ENCODE measurements at regions of chr4 and their contacts with region 1.

Region 1: DNA sequence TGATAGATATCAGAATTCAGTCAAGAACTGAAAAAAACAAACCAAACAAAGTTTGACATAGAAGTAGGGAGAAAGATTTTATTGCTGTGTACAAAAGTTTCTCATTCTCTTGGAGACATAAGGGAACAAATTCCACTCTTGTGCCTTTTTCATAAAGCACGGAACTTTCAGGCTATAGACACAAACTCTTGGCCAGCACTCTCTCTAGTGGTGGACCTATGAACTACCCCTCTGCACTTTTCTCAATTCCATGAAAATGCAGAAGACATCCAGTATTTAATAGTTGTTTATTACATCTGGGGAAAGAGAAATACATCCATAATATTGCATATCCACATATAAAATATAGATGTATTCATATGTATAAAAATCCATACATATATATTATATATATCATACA is 291.6 kb upstream of the HS3ST1 start:
- DNase-seq: no peak
- ATAC-seq: peak in 1 of 4 donors; percentile 42
- H3K4me3 ChIP-seq: no peak overlapping the region
- H3K27ac ChIP-seq: no peak overlapping the region
- H3K4me1 ChIP-seq: peaks cover 0 to 5% (median 0%) of the 10 kb centered on the region in 12 donors
- H3K27me3 ChIP-seq: no peaks in the 10 kb centered on the region
- CTCF ChIP-seq: peak; percentile 60 to 80 (median 72)
- POLR2A ChIP-seq: no peak

Region 2: GRCh38 chr4:10582059-10582686 is 1138.1 kb before region 1 on chr4:
- intact Hi-C with region 1: loop called in 8 of 10 experiments (anchors 5 to 10 kb)
- DNase-seq: peak in 3 of 5 donors; percentile 23 to 30 (median 23)
- ATAC-seq: peak in 2 of 4 donors; percentile 58
- H3K4me3 ChIP-seq: no peak overlapping the region
- H3K27ac ChIP-seq: no peak overlapping the region
- H3K4me1 ChIP-seq: peaks cover 0 to 11% (median 0%) of the 10 kb centered on the region in 12 donors
- H3K27me3 ChIP-seq: peaks cover 0 to 10% (median 0%) of the 10 kb centered on the region in 9 donors
- CTCF ChIP-seq: peak; percentile 57 to 87 (median 77)
- POLR2A ChIP-seq: no peak

Region 3: GRCh38 chr4:11424000-11424399 is 296.3 kb before region 1 on chr4:
- intact Hi-C with region 1: loop called in 7 of 10 experiments (anchors 5 to 10 kb)
- DNase-seq: peak in 2 of 5 donors; percentile 30 to 58
- ATAC-seq: no peak
- H3K4me3 ChIP-seq: no peak overlapping the region
- H3K27ac ChIP-seq: no peak overlapping the region
- H3K4me1 ChIP-seq: peaks cover 0 to 27% (median 16%) of the 10 kb centered on the region in 12 donors
- H3K27me3 ChIP-seq: peaks cover 0 to 21% (median 12%) of the 10 kb centered on the region in 9 donors
- CTCF ChIP-seq: peak in 7 of 12 donors; percentile 14 to 45 (median 30)
- POLR2A ChIP-seq: no peak

Region 4: DNA sequence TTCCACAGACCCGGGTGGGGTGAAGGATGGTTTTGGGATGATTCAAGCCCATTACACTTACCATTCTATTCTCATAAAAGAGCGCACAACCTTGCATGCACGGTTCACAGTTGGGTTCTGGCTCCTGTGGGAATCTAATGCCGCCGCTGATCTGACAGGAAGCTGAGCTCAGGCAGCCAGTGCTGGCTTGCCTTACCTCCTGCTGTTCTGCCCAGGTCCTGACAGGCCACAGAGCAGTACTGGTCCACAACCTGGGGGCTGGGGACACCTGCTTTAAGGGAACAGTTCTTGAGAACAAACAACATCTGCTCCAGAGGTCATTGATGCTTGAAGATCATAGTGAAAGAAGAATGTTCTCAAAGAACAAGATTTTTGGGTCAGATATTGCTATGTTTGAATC is 283.6 kb before region 1 on chr4:
- intact Hi-C with region 1: loop called in 1 of 10 experiments (anchors 10 kb)
- DNase-seq: no peak
- ATAC-seq: no peak
- H3K4me3 ChIP-seq: no peak overlapping the region
- H3K27ac ChIP-seq: no peak overlapping the region
- H3K4me1 ChIP-seq: peaks cover 0 to 29% (median 0%) of the 10 kb centered on the region in 12 donors
- H3K27me3 ChIP-seq: no peaks in the 10 kb centered on the region
- CTCF ChIP-seq: no peak
- POLR2A ChIP-seq: no peak

Region 5: GRCh38 chr4:11614399-11614798 is 105.9 kb before region 1 on chr4:
- intact Hi-C with region 1: no loop called
- DNase-seq: no peak
- ATAC-seq: no peak
- H3K4me3 ChIP-seq: no peak overlapping the region
- H3K27ac ChIP-seq: no peak overlapping the region
- H3K4me1 ChIP-seq: peaks cover 0 to 4% (median 0%) of the 10 kb centered on the region in 12 donors
- H3K27me3 ChIP-seq: no peaks in the 10 kb centered on the region
- CTCF ChIP-seq: no peak
- POLR2A ChIP-seq: no peak

Measured in heart left ventricle (tissue), 16 donors.